ENCODE measurements at regions of chr15 and their contacts with region 1.

Region 1: DNA sequence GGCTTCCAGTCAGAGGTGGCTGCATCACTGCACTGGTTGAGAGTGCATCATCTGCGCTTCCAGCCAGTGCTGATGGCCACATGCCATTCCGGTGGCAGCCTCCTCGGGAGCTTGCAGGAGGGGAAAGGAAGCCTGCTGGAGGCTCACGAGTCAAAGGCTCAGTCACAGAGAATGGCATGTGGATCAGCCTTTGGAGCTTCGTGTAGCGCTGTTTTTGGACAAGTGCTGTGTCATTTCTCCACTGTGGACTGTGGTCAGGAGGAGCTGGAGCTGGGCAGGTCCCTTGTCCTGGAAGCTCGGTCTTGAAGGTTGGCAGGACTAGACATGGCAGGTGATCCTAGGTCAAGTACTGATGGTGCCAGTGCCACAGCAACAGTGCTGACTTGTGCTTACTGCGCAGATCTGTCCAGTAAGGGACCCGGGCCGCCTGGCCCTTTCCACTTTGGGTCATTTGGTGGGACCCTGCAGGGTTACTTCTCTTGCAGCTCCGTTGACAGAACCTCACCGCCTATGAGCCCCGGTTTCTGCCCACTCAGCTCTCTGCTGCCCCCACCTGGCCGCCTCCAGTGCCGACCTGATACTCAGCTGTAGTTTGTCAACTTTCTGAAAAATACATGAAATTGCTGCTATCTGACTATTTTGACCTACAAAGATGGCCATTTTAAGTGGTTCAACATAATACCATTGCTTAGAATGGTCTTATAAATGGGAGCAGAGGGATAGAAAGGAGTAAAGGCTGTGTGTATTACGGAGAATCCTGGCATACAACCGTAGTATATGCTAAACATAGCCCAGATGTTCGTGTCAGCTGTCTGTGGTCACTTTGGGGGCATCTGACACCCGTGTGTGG is 27.6 kb upstream of the TRPM1 start:
- DNase-seq: peak; percentile 90
- ATAC-seq: peak; percentile 76

Region 2: DNA sequence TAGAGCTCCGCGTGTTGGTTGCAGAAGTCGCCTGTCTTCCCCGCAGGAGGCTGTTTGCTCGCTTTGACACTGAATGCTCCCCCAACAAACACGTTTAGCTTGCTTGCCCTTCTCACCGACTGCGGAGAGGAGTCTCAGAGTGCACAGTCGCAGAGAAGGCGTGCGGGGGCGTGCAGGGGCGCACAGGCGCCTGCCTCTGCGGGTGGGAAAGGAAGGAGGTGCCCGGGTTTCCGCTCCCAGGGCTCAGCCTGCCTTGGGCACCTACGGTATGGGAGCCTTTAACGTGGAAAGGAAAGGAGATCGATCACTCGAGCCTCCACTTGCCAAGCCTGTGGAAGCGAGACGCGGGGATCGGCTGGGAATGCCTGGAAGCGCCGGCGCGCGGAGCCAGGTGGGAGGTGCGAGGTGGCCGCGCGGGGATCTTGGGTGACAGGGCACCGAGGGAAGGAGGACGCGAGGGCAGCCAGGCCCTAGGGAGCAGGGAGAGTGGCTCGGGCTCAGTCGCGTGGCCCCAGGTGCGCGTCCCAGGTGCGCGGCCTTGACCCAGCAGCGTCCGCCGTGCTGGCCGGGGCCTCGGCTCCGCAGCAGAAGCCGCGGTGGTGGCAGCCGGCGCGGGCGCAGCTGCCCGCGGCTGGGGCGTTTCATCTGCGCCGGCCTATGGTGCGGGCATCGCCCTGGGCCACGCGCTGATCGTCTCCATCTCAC is 225.5 kb before region 1 on chr15 and contains the start of gene FAN1:
- intact Hi-C with region 1: loop called (anchors 2 kb)
- DNase-seq: peak; percentile 91
- ATAC-seq: peak; percentile 99
- total RNA-seq, gene FAN1: 23.5 TPM

Region 3: GRCh38 chr15:31263751-31264558 is 134.8 kb after region 1 on chr15:
- intact Hi-C with region 1: no loop called
- DNase-seq: peak; percentile 94
- ATAC-seq: peak; percentile 57